ENCODE measurements at regions of chr20 and their contacts with region 1.

Region 1: DNA sequence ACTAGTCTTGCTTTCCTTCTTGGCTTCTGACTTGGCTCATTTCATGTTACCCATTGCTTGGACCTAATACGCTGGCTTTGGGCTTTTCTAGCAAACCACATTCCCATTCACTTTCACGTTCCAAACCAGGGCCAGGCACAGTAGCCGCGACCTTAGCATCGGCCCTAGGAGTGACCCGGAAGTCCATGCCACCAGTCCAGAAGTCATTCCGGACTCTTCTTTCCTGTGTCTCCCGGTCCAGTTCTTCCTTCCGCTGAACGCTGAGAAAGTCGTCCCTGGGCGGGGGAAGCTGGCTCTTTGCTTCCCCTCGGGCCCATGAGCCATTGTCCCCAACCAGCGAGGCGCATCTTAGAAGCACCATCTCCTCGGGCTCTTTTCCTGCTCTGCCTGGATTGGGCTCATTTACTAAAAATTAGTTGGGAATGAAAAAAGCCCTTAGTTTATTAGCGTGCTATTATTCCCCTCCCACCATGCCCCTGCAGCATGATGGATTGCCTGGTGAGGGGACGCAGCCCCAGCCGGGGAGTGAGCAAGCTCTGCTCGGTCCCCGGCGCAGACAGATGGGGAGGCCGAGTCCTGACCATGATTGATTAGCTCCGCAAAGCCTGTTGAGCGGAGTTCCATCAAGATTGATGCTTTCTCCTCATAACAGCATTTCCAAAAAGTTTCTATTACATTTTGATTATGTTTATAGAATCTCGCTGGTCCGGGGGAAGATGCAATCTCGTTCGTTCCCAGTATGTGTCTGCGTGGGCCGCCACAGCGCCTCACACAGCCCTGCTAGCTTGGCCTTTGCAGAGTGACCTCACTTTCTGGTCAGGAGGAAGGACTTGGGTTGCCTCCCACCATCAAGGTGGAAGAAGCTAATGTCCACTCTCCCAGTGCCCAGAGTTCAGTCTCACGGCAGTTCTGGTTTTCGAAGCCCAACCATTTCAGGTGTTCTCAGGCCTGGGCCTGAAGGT is 115.1 kb upstream of the TOP1 start:
- DNase-seq: no peak
- ATAC-seq: no peak
- H3K4me3 ChIP-seq: no peak overlapping the region
- H3K27ac ChIP-seq: no peak overlapping the region
- H3K4me1 ChIP-seq: no peaks in the 10 kb centered on the region
- H3K27me3 ChIP-seq: no peaks in the 10 kb centered on the region
- CTCF ChIP-seq: no peak

Region 2: DNA sequence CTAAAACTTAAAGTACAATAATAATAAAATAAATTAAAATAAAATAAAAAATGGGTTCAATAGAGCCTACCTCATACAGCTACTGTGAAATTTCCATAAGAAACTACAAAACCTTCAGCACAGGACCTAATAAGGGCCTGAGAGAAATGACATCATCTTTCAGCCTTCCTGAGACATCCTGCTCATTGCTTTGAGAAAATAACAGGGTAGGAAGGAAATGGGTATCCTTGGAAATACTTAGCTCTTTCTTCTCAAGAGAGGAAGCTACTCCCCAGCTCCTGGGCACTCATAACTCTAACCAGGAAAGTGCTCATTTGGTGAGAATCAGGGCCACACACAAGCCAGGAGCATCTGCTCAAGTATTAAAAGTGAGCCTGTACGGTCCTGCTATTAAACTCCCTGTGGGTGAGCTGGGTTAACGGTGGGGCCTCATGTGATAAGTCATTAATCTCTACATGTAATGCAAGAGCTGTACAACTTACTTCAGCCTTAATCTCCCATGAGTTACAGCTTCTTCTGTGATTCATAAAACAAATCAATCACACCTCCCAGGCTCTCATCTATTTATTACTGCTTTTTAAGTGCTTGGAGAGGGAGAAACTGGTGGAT is 365.9 kb before region 1 on chr20:
- intact Hi-C with region 1: no loop called
- DNase-seq: no peak
- ATAC-seq: no peak
- H3K4me3 ChIP-seq: no peak overlapping the region
- H3K27ac ChIP-seq: no peak overlapping the region
- H3K4me1 ChIP-seq: no peaks in the 10 kb centered on the region
- H3K27me3 ChIP-seq: no peaks in the 10 kb centered on the region
- CTCF ChIP-seq: no peak

Region 3: DNA sequence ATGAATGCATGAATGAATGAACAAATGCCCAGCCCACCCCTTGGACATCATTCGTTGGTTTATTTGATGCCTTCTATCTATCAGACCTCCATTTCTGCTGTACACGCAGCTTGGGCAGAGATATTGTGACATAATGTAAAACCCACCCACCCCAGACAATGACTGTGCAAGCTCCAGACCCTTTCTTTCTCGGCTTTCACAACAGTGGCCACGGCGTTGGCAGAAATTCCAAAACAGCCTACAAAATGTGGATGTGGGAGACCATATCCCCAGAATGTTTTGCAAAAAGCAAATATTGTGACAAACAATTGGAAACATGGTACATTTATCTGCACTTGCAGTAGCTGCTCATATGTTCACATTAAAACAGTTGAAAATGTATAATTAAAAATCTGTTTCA is 62.5 kb before region 1 on chr20:
- intact Hi-C with region 1: loop called in 1 of 10 experiments (anchors 10 kb)
- DNase-seq: no peak
- ATAC-seq: no peak
- H3K4me3 ChIP-seq: no peak overlapping the region
- H3K27ac ChIP-seq: no peak overlapping the region
- H3K4me1 ChIP-seq: no peaks in the 10 kb centered on the region
- H3K27me3 ChIP-seq: peaks cover 0 to 5% (median 0%) of the 10 kb centered on the region in 7 donors
- CTCF ChIP-seq: no peak

Measured in heart right ventricle (tissue), 16 donors.